WTC11 (cell line): ENCODE measurements at regions of chrX and their contacts with region 1.

Region 1: DNA sequence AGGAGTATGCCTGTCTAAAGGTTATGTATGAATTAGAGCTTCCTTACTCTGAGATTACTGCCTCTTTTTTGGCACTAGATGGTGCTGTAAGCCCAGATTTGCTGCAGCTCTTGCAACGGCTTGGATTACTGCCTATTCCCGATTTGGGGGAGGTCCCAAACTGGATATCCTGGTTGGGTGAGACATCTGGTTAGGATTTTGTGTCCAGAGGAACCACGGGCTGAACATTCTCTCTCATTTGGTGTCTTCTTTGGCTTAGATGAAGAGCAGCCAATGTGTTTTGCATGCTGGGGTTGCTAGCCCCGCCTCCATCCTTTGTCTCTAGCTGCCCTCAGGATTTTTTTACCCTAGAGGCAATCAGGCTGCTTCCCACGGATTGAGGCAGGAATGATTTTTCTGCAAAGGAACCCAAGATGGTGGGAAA is 31.9 kb downstream of the F8A1 start:
- DNase-seq: peak; percentile 39
- ATAC-seq: peak; percentile 91
- H3K4me3 Mint-ChIP-seq: peak overlapping the region; percentile 60
- H3K27ac Mint-ChIP-seq: no peak overlapping the region
- H3K4me1 Mint-ChIP-seq: no peaks in the 10 kb centered on the region
- H3K27me3 Mint-ChIP-seq: peaks cover 6% of the 10 kb centered on the region
- CTCF ChIP-seq: 0 out of 2 replicates have a peak, but pooled peaks have one; percentile 36

Region 2: GRCh38 chrX:154980330-154981096 is 62.4 kb after region 1 on chrX:
- CTCF ChIA-PET with region 1: interaction called, 10 read pairs
- POLR2A ChIA-PET with region 1: no interaction called
- DNase-seq: peak; percentile 67
- ATAC-seq: peak; percentile 84
- H3K4me3 Mint-ChIP-seq: no peak overlapping the region
- H3K27ac Mint-ChIP-seq: no peak overlapping the region
- H3K4me1 Mint-ChIP-seq: no peaks in the 10 kb centered on the region
- H3K27me3 Mint-ChIP-seq: no peaks in the 10 kb centered on the region; the same call in 1 of the 2 replicates
- CTCF ChIP-seq: peak; percentile 36; the same call in 1 of the 2 replicates

Region 3: GRCh38 chrX:155086202-155086840 is 168.2 kb after region 1 on chrX:
- CTCF ChIA-PET with region 1: interaction called, 25 read pairs
- POLR2A ChIA-PET with region 1: interaction called, 3 read pairs
- DNase-seq: peak; percentile 69
- ATAC-seq: peak; percentile 93
- H3K4me3 Mint-ChIP-seq: no peak overlapping the region
- H3K27ac Mint-ChIP-seq: peak overlapping the region; percentile 36; the same call in 1 of the 2 replicates
- H3K4me1 Mint-ChIP-seq: 0 out of 2 replicates have a peak, but pooled peaks cover 3% of the 10 kb centered on the region
- H3K27me3 Mint-ChIP-seq: no peaks in the 10 kb centered on the region
- CTCF ChIP-seq: peak; percentile 46

Region 4: GRCh38 chrX:155148724-155149537 is 230.9 kb after region 1 on chrX:
- CTCF ChIA-PET with region 1: interaction called, 19 read pairs
- POLR2A ChIA-PET with region 1: no interaction called
- DNase-seq: peak; percentile 17
- ATAC-seq: no peak
- H3K4me3 Mint-ChIP-seq: no peak overlapping the region
- H3K27ac Mint-ChIP-seq: no peak overlapping the region
- H3K4me1 Mint-ChIP-seq: peaks cover 2% of the 10 kb centered on the region; the same call in 1 of the 2 replicates
- H3K27me3 Mint-ChIP-seq: 0 out of 2 replicates have a peak, but pooled peaks cover 3% of the 10 kb centered on the region
- CTCF ChIP-seq: peak; percentile 53